ENCODE measurements at regions of chr7 and their contacts with region 1.

Region 1: GRCh38 chr7:84372155-84372621 is 177.6 kb upstream of the SEMA3A start:
- DNase-seq: no peak
- ATAC-seq: 0 out of 3 replicates have a peak, but pooled peaks have one; percentile 34
- H3K4me3 ChIP-seq: no peak overlapping the region
- H3K27ac ChIP-seq: no peak overlapping the region
- H3K4me1 ChIP-seq: no peaks in the 10 kb centered on the region
- H3K27me3 ChIP-seq: no peaks in the 10 kb centered on the region
- CTCF ChIP-seq: no peak
- EP300 ChIP-seq: no peak
- POLR2A ChIP-seq: no peak
- RAD21 ChIP-seq: no peak

Region 2: DNA sequence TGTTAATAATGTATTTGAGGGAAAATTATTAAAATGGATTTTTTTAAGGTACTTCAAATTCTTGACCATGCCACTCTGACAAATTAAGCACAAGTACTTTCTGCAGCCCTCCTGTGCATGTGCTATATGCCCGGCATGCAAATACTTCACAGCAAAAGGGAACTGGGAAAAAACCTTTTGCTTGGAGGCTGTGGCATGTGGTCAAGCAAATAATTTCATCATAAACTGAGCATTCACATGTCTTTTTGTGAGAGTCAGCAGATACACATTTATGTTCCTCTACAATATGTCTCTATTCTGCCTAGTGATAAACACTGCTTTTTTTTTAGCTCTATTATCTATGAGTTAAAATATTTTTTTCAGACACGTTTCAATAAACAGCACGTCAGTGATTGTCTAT is 123.9 kb before region 1 on chr7:
- CTCF ChIA-PET with region 1: no interaction called
- POLR2A ChIA-PET with region 1: no interaction called
- RAD21 ChIA-PET with region 1: no interaction called
- SMC1A ChIA-PET with region 1: interaction called, 3 read pairs
- in situ Hi-C with region 1: no loop called
- intact Hi-C with region 1: loop called (anchors 10 kb)
- DNase-seq: peak; percentile 36
- ATAC-seq: peak; percentile 95
- H3K4me3 ChIP-seq: no peak overlapping the region
- H3K27ac ChIP-seq: no peak overlapping the region
- H3K4me1 ChIP-seq: 0 out of 2 replicates have a peak, but pooled peaks cover 4% of the 10 kb centered on the region
- H3K27me3 ChIP-seq: no peaks in the 10 kb centered on the region
- CTCF ChIP-seq: no peak
- EP300 ChIP-seq: peak in 1 of 2 experiments; percentile 48; a peak in 1 of 4 replicates
- POLR2A ChIP-seq: no peak
- RAD21 ChIP-seq: no peak

Region 3: GRCh38 chr7:84389242-84389641 is 17.1 kb after region 1 on chr7:
- CTCF ChIA-PET with region 1: interaction called, 3 read pairs
- POLR2A ChIA-PET with region 1: no interaction called
- RAD21 ChIA-PET with region 1: no interaction called
- SMC1A ChIA-PET with region 1: interaction called, 11 read pairs
- in situ Hi-C with region 1: no loop called
- intact Hi-C with region 1: no loop called
- DNase-seq: peak; percentile 36
- ATAC-seq: peak; percentile 100
- H3K4me3 ChIP-seq: no peak overlapping the region
- H3K27ac ChIP-seq: no peak overlapping the region
- H3K4me1 ChIP-seq: no peaks in the 10 kb centered on the region
- H3K27me3 ChIP-seq: no peaks in the 10 kb centered on the region
- CTCF ChIP-seq: no peak
- EP300 ChIP-seq: peak; percentile 30 to 92; a peak in 3 of 4 replicates
- POLR2A ChIP-seq: no peak
- RAD21 ChIP-seq: no peak

Region 4: GRCh38 chr7:84469034-84469433 is 96.8 kb after region 1 on chr7:
- CTCF ChIA-PET with region 1: no interaction called
- POLR2A ChIA-PET with region 1: no interaction called
- RAD21 ChIA-PET with region 1: no interaction called
- SMC1A ChIA-PET with region 1: no interaction called
- in situ Hi-C with region 1: no loop called
- intact Hi-C with region 1: no loop called
- DNase-seq: no peak
- ATAC-seq: no peak
- H3K4me3 ChIP-seq: no peak overlapping the region
- H3K27ac ChIP-seq: no peak overlapping the region
- H3K4me1 ChIP-seq: no peaks in the 10 kb centered on the region
- H3K27me3 ChIP-seq: no peaks in the 10 kb centered on the region
- CTCF ChIP-seq: no peak
- EP300 ChIP-seq: no peak
- POLR2A ChIP-seq: no peak
- RAD21 ChIP-seq: no peak